ENCODE measurements at regions of chr4 and their contacts with region 1.

Region 1: DNA sequence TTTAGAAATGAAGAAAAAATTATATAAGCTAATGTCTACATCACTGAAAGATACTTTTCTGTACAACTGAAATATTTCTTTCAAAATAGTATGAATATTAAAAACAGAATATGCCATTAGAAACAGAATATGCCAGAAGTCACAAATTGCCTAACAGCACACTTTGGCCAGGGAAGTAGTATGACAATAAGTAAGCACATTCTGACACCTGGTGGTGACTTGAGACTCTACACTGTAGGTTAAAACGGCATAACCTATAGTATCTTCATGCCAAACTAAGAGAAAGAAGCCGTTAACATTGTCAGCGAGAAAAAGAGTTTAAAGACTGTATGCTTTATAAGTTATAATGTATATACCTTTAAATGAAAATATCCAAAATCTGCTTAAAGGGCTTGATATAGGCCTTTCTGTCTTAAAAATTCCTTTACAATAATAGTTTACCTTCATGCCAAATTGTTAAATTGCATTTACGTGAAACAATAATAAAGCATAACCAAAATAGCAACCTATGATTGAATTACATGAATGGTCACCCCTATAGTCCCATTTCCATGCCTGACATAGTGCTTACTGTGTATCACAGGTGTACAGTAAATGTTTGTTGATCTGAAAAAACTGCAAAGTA is 32.8 kb downstream of the FAM13A start:
- DNase-seq: peak; percentile 60
- H3K4me3 ChIP-seq: no peak overlapping the region
- H3K27ac ChIP-seq: no peak overlapping the region
- H3K4me1 ChIP-seq: peaks cover 0 to 18% (median 3%) of the 10 kb centered on the region in 4 donors
- H3K27me3 ChIP-seq: no peaks in the 10 kb centered on the region
- CTCF ChIP-seq: peak; percentile 77 to 93 (median 82)
- EP300 ChIP-seq: no peak
- POLR2A ChIP-seq: no peak

Region 2: GRCh38 chr4:88533937-88534750 is 490.0 kb before region 1 on chr4:
- in situ Hi-C with region 1: loop called in 3 of 4 experiments (anchors 10 to 25 kb)
- intact Hi-C with region 1: no loop called
- DNase-seq: no peak
- H3K4me3 ChIP-seq: no peak overlapping the region
- H3K27ac ChIP-seq: no peak overlapping the region
- H3K4me1 ChIP-seq: no peaks in the 10 kb centered on the region
- H3K27me3 ChIP-seq: no peaks in the 10 kb centered on the region
- CTCF ChIP-seq: no peak
- EP300 ChIP-seq: no peak
- POLR2A ChIP-seq: no peak

Region 3: GRCh38 chr4:88706574-88706973 is 317.6 kb before region 1 on chr4:
- in situ Hi-C with region 1: loop called in 2 of 4 experiments (anchors 25 kb)
- intact Hi-C with region 1: loop called (anchors 5 kb)
- DNase-seq: no peak
- H3K4me3 ChIP-seq: no peak overlapping the region
- H3K27ac ChIP-seq: peak overlapping the region in 3 of 4 donors; percentile 14 to 46 (median 35)
- H3K4me1 ChIP-seq: peaks cover 0 to 5% (median 0%) of the 10 kb centered on the region in 4 donors
- H3K27me3 ChIP-seq: no peaks in the 10 kb centered on the region
- CTCF ChIP-seq: peak; percentile 20 to 44 (median 36)
- EP300 ChIP-seq: no peak
- POLR2A ChIP-seq: no peak

Region 4: GRCh38 chr4:88823058-88823919 is 200.9 kb before region 1 on chr4:
- in situ Hi-C with region 1: loop called (anchors 5 to 25 kb)
- intact Hi-C with region 1: loop called (anchors 10 kb)
- DNase-seq: peak; percentile 90
- H3K4me3 ChIP-seq: peak overlapping the region; percentile 29 to 59 (median 44)
- H3K27ac ChIP-seq: peak overlapping the region; percentile 94 to 96 (median 96)
- H3K4me1 ChIP-seq: peaks cover 13 to 44% (median 28%) of the 10 kb centered on the region in 4 donors
- H3K27me3 ChIP-seq: no peaks in the 10 kb centered on the region
- CTCF ChIP-seq: no peak
- EP300 ChIP-seq: peak; percentile 34
- POLR2A ChIP-seq: peak; percentile 94

Region 5: GRCh38 chr4:88858752-88859151 is 165.4 kb before region 1 on chr4:
- in situ Hi-C with region 1: no loop called
- intact Hi-C with region 1: no loop called
- DNase-seq: no peak
- H3K4me3 ChIP-seq: no peak overlapping the region
- H3K27ac ChIP-seq: peak overlapping the region in 1 of 4 donors; percentile 58
- H3K4me1 ChIP-seq: peaks cover 0 to 20% (median 2%) of the 10 kb centered on the region in 4 donors
- H3K27me3 ChIP-seq: no peaks in the 10 kb centered on the region
- CTCF ChIP-seq: no peak
- EP300 ChIP-seq: no peak
- POLR2A ChIP-seq: no peak

Region 6: DNA sequence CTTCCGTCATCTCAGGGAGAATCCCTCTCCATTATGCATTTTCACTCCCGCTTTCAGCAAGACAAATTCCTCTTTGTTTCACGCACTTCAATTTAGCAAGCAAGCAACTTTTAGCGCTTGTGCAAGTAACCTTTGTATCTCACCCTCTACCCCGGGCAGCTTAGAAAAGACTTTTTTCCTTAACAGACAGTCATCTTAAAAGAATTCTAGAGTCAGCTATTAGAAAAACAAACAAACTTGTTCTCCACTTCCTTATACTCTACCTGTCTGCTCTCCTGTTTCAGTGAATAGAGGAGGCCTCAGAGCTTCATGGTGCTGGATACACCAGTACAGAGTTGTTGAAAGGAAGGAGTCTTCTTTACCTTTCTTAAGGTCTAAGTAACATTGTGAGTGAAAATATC is 99.3 kb after region 1 on chr4:
- in situ Hi-C with region 1: no loop called
- intact Hi-C with region 1: no loop called
- DNase-seq: no peak
- H3K4me3 ChIP-seq: no peak overlapping the region
- H3K27ac ChIP-seq: peak overlapping the region in 3 of 4 donors; percentile 47 to 55 (median 55)
- H3K4me1 ChIP-seq: peaks cover 0 to 15% (median 5%) of the 10 kb centered on the region in 4 donors
- H3K27me3 ChIP-seq: no peaks in the 10 kb centered on the region
- CTCF ChIP-seq: no peak
- EP300 ChIP-seq: no peak
- POLR2A ChIP-seq: no peak

Measured in transverse colon (tissue), 4 donors.